Panc1 (cell line): ENCODE measurements at regions of chr6 and their contacts with region 1.

Region 1: GRCh38 chr6:119122336-119122735 is 43.9 kb upstream of the FAM184A start:
- DNase-seq: no peak
- ATAC-seq: no peak
- H3K4me3 ChIP-seq: no peak overlapping the region
- H3K27ac ChIP-seq: no peak overlapping the region
- H3K4me1 ChIP-seq: peaks cover 3% of the 10 kb centered on the region; the same call in 1 of the 2 replicates
- H3K27me3 ChIP-seq: peaks cover 2% of the 10 kb centered on the region; the same call in 1 of the 2 replicates
- CTCF ChIP-seq: no peak

Region 2: DNA sequence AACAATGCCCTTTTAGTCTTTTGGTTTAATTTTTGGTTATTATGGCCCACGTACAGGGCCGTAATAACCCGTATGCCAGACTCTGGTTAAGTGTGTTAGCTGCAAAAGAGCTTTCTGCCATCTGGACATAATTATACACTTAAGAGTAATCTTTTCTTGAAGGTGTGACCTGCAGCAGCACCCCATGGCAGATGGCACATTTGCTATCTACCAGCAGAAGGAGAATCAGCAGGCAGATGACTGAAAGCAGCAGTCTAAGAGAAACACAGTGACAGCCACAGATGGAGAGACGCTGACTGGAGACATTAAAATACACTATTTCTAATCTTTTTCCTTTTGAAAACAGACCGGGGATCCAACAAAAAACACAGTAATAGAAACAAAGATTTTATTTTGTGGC is 209.7 kb before region 1 on chr6:
- CTCF ChIA-PET with region 1: no interaction called
- POLR2A ChIA-PET with region 1: interaction called, 11 read pairs
- in situ Hi-C with region 1: no loop called
- intact Hi-C with region 1: no loop called
- DNase-seq: no peak
- ATAC-seq: no peak
- H3K4me3 ChIP-seq: no peak overlapping the region
- H3K27ac ChIP-seq: no peak overlapping the region
- H3K4me1 ChIP-seq: no peaks in the 10 kb centered on the region
- H3K27me3 ChIP-seq: no peaks in the 10 kb centered on the region
- CTCF ChIP-seq: no peak